Activated T-helper 2 cell treated with anti-CD3 and anti-CD28 coated beads, Interferon-gamma antibody, Interleukin-2, Interleukin-4, amounts not matched to agents 10 μg/mL and 5 μg/mL and 100 μg/mL, durations not matched to agents 14 hours and 24 hours and 36 hours (primary cell): ENCODE measurements at regions of chr1 and their contacts with region 1.

Region 1: GRCh38 chr1:229625915-229626831 is at the starts of genes TAF5L and URB2:
- DNase-seq: peak; percentile 84
- H3K4me3 Mint-ChIP-seq: peak within 1 kb of the TSS; percentile 96
- H3K27ac Mint-ChIP-seq: peak within 1 kb of the TSS; percentile 85
- H3K4me1 Mint-ChIP-seq: peaks cover 49% of the 10 kb centered on the region
- H3K27me3 Mint-ChIP-seq: no peaks in the 10 kb centered on the region
- total RNA-seq, gene TAF5L: 28.3 and 28.4 TPM in 2 replicates
- total RNA-seq, gene URB2: 25.8 and 27.0 TPM in 2 replicates

Region 2: DNA sequence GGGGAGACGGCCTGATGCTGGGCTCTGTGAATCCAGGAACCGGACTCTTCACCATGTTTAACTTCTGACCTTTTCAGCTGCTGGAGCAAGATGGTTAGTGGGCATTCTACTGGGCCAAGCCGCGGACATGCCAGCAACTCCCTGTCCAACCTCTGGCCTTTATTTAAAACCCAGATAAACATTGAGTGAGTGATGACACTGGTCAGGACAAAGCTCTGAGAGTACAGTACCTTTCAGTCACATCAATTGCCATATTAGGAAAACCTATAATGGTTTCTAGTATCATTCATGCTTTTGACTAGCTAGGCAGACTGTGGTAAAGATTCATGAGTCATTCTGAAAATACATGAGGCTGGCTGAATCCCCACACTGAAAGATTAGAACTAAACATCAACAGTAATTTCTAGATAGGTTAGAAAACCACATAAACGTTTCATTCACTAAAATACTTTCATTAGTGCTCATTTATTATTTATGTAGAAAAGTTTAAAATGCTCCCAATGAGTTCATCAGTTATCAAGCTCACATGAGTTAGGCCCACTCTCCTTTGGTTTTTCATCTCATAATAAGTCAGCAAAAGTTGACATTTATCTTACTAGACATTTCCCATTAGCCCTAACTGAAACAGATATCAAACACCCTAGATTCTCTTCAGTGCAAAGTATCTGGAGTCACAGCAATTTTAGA is 185.2 kb before region 1 on chr1:
- intact Hi-C with region 1: loop called (anchors 10 kb)
- DNase-seq: peak; percentile 28
- H3K4me3 Mint-ChIP-seq: no peak overlapping the region
- H3K27ac Mint-ChIP-seq: peak overlapping the region; percentile 53
- H3K4me1 Mint-ChIP-seq: peaks cover 22% of the 10 kb centered on the region
- H3K27me3 Mint-ChIP-seq: peaks cover 22% of the 10 kb centered on the region

Region 3: GRCh38 chr1:229507951-229508822 is 118.0 kb before region 1 on chr1 and contains the start of gene NUP133:
- intact Hi-C with region 1: loop called (anchors 5 kb)
- DNase-seq: peak; percentile 96
- H3K4me3 Mint-ChIP-seq: peak within 1 kb of the TSS; percentile 89
- H3K27ac Mint-ChIP-seq: peak within 1 kb of the TSS; percentile 89
- H3K4me1 Mint-ChIP-seq: peaks cover 21% of the 10 kb centered on the region
- H3K27me3 Mint-ChIP-seq: no peaks in the 10 kb centered on the region
- total RNA-seq, gene NUP133: 49.2 and 50.1 TPM in 2 replicates

Region 4: GRCh38 chr1:229558571-229559335 is 67.4 kb before region 1 on chr1 and contains the start of gene ABCB10:
- intact Hi-C with region 1: loop called (anchors 1 kb)
- DNase-seq: peak; percentile 82
- H3K4me3 Mint-ChIP-seq: peak within 1 kb of the TSS; percentile 87
- H3K27ac Mint-ChIP-seq: peak within 1 kb of the TSS; percentile 80
- H3K4me1 Mint-ChIP-seq: peaks cover 34% of the 10 kb centered on the region
- H3K27me3 Mint-ChIP-seq: no peaks in the 10 kb centered on the region
- total RNA-seq, gene ABCB10: 40.1 and 42.7 TPM in 2 replicates

Region 5: DNA sequence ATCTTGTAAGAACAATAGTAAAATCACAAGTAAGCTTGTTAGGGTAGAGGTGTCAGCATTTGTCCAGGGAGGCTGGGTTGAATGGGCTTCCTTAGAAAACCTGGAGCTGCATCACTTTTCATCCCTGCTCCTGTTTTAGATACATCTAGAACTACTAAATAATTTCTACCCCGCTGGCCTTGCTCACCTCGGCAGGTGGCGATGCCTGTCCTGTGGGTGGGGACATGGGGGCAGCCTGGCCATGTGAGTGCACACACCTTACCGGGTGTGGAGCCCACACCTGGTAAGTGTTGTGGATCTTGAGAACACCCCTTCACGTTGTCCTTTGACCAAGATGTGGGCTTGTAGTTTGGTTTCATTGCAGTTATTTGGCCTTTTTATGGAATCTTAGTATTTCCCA is 29.6 kb after region 1 on chr1:
- intact Hi-C with region 1: no loop called
- DNase-seq: no peak
- H3K4me3 Mint-ChIP-seq: no peak overlapping the region
- H3K27ac Mint-ChIP-seq: no peak overlapping the region
- H3K4me1 Mint-ChIP-seq: peaks cover 8% of the 10 kb centered on the region
- H3K27me3 Mint-ChIP-seq: no peaks in the 10 kb centered on the region

Region 6: DNA sequence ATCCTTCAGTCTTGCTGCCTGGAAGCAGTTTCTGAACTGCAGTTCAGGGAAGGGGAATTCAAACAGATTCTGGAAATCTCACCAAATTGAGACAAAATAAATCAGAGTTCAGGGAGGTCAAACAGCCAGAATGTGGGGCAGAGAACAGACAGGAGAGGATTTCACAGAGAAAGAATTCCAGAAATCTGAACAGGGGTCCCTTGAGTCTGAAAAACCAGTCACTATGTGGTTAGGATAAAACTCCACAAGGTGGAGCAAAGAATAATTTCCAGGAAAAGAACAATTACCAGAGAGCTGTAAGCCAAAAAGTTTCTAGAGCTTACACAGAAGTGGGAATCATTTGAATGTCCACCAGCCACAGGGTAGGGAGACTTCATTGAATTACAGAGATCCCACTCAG is 84.6 kb after region 1 on chr1:
- intact Hi-C with region 1: no loop called
- DNase-seq: no peak
- H3K4me3 Mint-ChIP-seq: no peak overlapping the region
- H3K27ac Mint-ChIP-seq: no peak overlapping the region
- H3K4me1 Mint-ChIP-seq: no peaks in the 10 kb centered on the region
- H3K27me3 Mint-ChIP-seq: peaks cover 4% of the 10 kb centered on the region

Region 7: GRCh38 chr1:230642263-230642959 is 1016.2 kb after region 1 on chr1 and contains the start of gene COG2:
- intact Hi-C with region 1: loop called (anchors 2 kb)
- DNase-seq: peak; percentile 92
- H3K4me3 Mint-ChIP-seq: peak within 1 kb of the TSS; percentile 98
- H3K27ac Mint-ChIP-seq: peak within 1 kb of the TSS; percentile 95
- H3K4me1 Mint-ChIP-seq: peaks cover 41% of the 10 kb centered on the region
- H3K27me3 Mint-ChIP-seq: peaks cover 19% of the 10 kb centered on the region
- total RNA-seq, gene COG2: 36.9 and 38.8 TPM in 2 replicates